ENCODE measurements at regions of chr16 and their contacts with region 1.

Region 1: DNA sequence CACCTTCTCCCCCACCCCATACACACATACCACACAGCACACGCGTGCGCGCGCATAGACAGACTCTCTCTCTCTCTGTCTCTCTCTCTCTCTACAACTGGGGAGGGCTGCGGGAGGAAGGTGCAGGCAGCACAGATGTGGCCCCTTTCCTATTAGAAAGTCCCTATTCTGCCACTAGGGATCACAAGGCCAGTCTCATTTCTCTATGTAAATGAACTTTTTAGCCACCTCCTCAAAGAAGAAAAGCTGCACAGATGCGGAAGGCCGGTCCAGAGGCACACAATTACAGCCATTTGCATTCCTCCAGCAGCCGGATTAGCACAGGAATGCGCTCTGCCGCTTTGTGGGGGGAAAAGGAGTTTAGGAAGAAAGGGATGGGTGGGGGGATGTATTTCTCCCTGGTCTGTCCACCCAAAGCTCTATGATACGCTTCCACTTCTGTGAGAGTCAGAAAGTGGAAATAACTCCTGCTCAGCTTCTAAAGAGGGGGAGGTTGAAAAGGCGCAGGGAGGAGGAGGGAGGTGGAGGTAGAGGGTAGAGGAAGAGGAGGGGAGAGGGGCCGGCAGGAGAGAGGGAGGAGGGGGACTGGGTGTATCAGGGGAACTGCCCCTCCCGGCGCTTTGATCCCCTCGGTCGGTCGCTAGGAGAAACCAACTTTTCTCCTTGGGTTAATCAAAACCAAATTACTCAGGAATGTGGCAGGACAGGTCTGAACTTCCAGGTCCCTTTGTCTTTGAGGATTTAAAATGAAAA is 11.7 kb downstream of the ZFHX3 start:
- DNase-seq: peak; percentile 81 to 90
- H3K4me3 ChIP-seq: peak overlapping the region; percentile 19
- H3K4me3 Mint-ChIP-seq: peak overlapping the region; percentile 75
- H3K27ac Mint-ChIP-seq: peak overlapping the region; percentile 95
- H3K4me1 ChIP-seq: peaks cover 82% of the 10 kb centered on the region
- H3K4me1 Mint-ChIP-seq: peaks cover 84% of the 10 kb centered on the region
- H3K27me3 ChIP-seq: no peaks in the 10 kb centered on the region
- H3K27me3 Mint-ChIP-seq: no peaks in the 10 kb centered on the region
- CTCF ChIP-seq: peak; percentile 21 to 43

Region 2: GRCh38 chr16:72111657-72112451 is 924.4 kb before region 1 on chr16:
- CTCF ChIA-PET with region 1: no interaction called
- POLR2A ChIA-PET with region 1: no interaction called
- intact Hi-C with region 1: no loop called
- DNase-seq: no peak
- H3K4me3 ChIP-seq: no peak overlapping the region
- H3K4me3 Mint-ChIP-seq: no peak overlapping the region
- H3K27ac Mint-ChIP-seq: no peak overlapping the region
- H3K4me1 ChIP-seq: no peaks in the 10 kb centered on the region
- H3K4me1 Mint-ChIP-seq: no peaks in the 10 kb centered on the region
- H3K27me3 ChIP-seq: no peaks in the 10 kb centered on the region
- H3K27me3 Mint-ChIP-seq: no peaks in the 10 kb centered on the region
- CTCF ChIP-seq: no peak

Region 3: GRCh38 chr16:72751076-72751475 is 285.2 kb before region 1 on chr16:
- CTCF ChIA-PET with region 1: no interaction called
- POLR2A ChIA-PET with region 1: no interaction called
- intact Hi-C with region 1: no loop called
- DNase-seq: no peak
- H3K4me3 ChIP-seq: no peak overlapping the region
- H3K4me3 Mint-ChIP-seq: no peak overlapping the region
- H3K27ac Mint-ChIP-seq: no peak overlapping the region
- H3K4me1 ChIP-seq: 0 out of 2 replicates have a peak, but pooled peaks cover 11% of the 10 kb centered on the region
- H3K4me1 Mint-ChIP-seq: no peaks in the 10 kb centered on the region
- H3K27me3 ChIP-seq: no peaks in the 10 kb centered on the region
- H3K27me3 Mint-ChIP-seq: no peaks in the 10 kb centered on the region
- CTCF ChIP-seq: no peak

Region 4: GRCh38 chr16:72876221-72876620 is 160.0 kb before region 1 on chr16:
- CTCF ChIA-PET with region 1: no interaction called
- POLR2A ChIA-PET with region 1: no interaction called
- intact Hi-C with region 1: loop called (anchors 1 kb)
- DNase-seq: no peak
- H3K4me3 ChIP-seq: no peak overlapping the region
- H3K4me3 Mint-ChIP-seq: peak overlapping the region; percentile 73
- H3K27ac Mint-ChIP-seq: peak overlapping the region; percentile 100
- H3K4me1 ChIP-seq: peaks cover 50% of the 10 kb centered on the region
- H3K4me1 Mint-ChIP-seq: peaks cover 58% of the 10 kb centered on the region
- H3K27me3 ChIP-seq: no peaks in the 10 kb centered on the region
- H3K27me3 Mint-ChIP-seq: no peaks in the 10 kb centered on the region
- CTCF ChIP-seq: no peak

Region 5: DNA sequence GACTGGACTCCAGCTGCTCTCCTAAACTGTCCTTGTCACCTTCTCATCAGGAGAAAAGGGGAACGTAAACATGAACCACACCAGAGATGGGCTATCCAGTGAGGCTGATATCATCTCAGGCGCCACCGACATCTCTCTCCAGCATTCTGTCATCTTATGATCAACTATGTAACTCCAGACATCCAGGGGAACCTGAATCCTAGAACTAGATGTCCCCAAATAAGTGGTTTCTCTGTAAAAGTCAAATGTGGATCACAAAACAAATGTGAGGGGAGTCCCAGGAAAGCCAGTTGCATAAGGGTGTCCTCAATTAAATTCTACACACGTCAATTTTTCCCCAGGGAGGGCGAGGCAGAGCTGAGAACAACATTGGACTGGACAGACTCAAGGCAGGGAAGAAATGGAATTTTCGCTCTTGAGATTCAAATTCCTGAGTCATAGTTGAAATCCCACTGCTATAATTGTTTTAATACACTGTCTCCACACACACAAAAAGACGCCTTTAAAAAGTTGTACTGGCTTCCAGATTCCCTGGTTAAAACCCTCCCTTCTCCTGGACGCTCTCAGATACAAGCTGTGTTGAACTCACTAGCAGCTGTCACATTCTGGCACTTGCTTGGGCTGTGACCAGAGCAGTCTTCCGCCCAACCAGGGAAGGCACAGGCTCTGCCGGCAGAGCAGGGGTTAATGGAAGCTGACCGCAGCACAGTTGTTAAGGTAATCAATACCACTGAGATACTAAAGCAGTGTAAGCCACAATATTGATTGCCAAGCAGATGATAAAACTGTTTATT is 50.9 kb before region 1 on chr16:
- CTCF ChIA-PET with region 1: no interaction called
- POLR2A ChIA-PET with region 1: interaction called, 18 read pairs
- intact Hi-C with region 1: no loop called
- DNase-seq: no peak
- H3K4me3 ChIP-seq: no peak overlapping the region
- H3K4me3 Mint-ChIP-seq: no peak overlapping the region
- H3K27ac Mint-ChIP-seq: no peak overlapping the region
- H3K4me1 ChIP-seq: peaks cover 31% of the 10 kb centered on the region
- H3K4me1 Mint-ChIP-seq: peaks cover 46% of the 10 kb centered on the region
- H3K27me3 ChIP-seq: no peaks in the 10 kb centered on the region
- H3K27me3 Mint-ChIP-seq: no peaks in the 10 kb centered on the region
- CTCF ChIP-seq: no peak

Region 6: GRCh38 chr16:73047518-73048291 is 11.5 kb after region 1 on chr16 and contains the start of gene ZFHX3:
- CTCF ChIA-PET with region 1: interaction called, 6 read pairs
- POLR2A ChIA-PET with region 1: interaction called, 9 read pairs
- intact Hi-C with region 1: loop called (anchors 1 kb)
- DNase-seq: peak; percentile 87 to 89
- H3K4me3 ChIP-seq: peak within 1 kb of the TSS; percentile 92
- H3K4me3 Mint-ChIP-seq: peak within 1 kb of the TSS; percentile 73
- H3K27ac Mint-ChIP-seq: peak within 1 kb of the TSS; percentile 77
- H3K4me1 ChIP-seq: peaks cover 66% of the 10 kb centered on the region
- H3K4me1 Mint-ChIP-seq: peaks cover 37% of the 10 kb centered on the region
- H3K27me3 ChIP-seq: no peaks in the 10 kb centered on the region
- H3K27me3 Mint-ChIP-seq: no peaks in the 10 kb centered on the region
- CTCF ChIP-seq: peak in 1 of 2 experiments; percentile 34
- total RNA-seq, gene ZFHX3: 39.9 TPM in 2 replicates

Region 7: DNA sequence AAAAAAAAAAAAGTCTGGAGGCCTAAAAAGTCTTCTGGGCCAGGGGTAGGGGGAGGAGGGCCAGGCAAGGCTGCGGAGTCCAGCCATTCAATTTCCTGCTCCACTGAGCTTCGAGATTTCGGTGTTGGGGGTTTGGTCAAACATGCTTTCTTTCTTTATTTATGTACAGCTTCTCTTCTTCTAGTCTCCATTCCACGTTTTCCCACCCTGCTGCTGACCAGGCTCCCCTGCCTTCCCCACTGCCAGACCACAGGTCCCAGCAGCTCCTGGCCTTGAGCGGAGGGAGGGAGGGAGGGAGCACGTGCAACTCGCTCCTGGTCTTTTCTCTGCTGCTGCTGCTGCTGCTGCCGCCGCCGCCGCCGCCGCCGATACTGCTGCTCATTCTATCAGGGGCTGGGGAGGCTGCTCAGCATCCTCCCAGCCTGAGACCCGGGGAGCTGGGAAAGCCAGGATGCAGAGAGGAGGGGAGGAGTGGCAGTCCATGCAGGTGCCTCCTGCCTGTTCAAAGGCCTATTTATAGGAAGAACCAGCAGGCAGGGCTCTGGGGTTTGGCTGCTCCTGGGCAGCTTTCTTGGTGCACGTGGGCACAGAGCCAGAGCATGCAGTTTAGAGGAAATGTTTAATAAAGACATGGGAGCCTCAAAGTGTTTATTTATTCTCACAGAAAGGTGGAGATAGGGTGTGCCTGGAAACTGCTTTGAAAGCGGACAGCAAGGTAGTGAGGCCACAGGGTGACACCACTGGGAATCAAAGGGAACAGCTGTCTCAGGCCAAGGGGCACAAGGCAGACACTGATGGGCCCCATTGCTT is 35.1 kb after region 1 on chr16:
- CTCF ChIA-PET with region 1: interaction called, 3 read pairs
- POLR2A ChIA-PET with region 1: no interaction called
- intact Hi-C with region 1: loop called (anchors 1 kb)
- DNase-seq: peak in 1 of 2 experiments; percentile 33
- H3K4me3 ChIP-seq: peak overlapping the region; percentile 19
- H3K4me3 Mint-ChIP-seq: peak overlapping the region; percentile 95
- H3K27ac Mint-ChIP-seq: peak overlapping the region; percentile 97
- H3K4me1 ChIP-seq: peaks cover 16% of the 10 kb centered on the region
- H3K4me1 Mint-ChIP-seq: peaks cover 21% of the 10 kb centered on the region
- H3K27me3 ChIP-seq: no peaks in the 10 kb centered on the region
- H3K27me3 Mint-ChIP-seq: no peaks in the 10 kb centered on the region
- CTCF ChIP-seq: no peak

Region 8: GRCh38 chr16:73082608-73083007 is 46.4 kb after region 1 on chr16:
- CTCF ChIA-PET with region 1: no interaction called
- POLR2A ChIA-PET with region 1: no interaction called
- intact Hi-C with region 1: no loop called
- DNase-seq: no peak
- H3K4me3 ChIP-seq: no peak overlapping the region
- H3K4me3 Mint-ChIP-seq: no peak overlapping the region
- H3K27ac Mint-ChIP-seq: no peak overlapping the region
- H3K4me1 ChIP-seq: no peaks in the 10 kb centered on the region
- H3K4me1 Mint-ChIP-seq: no peaks in the 10 kb centered on the region
- H3K27me3 ChIP-seq: no peaks in the 10 kb centered on the region
- H3K27me3 Mint-ChIP-seq: no peaks in the 10 kb centered on the region
- CTCF ChIP-seq: no peak

Measured in Caco-2 (cell line).